ENCODE measurements at regions of chrX and their contacts with region 1.

Region 1: DNA sequence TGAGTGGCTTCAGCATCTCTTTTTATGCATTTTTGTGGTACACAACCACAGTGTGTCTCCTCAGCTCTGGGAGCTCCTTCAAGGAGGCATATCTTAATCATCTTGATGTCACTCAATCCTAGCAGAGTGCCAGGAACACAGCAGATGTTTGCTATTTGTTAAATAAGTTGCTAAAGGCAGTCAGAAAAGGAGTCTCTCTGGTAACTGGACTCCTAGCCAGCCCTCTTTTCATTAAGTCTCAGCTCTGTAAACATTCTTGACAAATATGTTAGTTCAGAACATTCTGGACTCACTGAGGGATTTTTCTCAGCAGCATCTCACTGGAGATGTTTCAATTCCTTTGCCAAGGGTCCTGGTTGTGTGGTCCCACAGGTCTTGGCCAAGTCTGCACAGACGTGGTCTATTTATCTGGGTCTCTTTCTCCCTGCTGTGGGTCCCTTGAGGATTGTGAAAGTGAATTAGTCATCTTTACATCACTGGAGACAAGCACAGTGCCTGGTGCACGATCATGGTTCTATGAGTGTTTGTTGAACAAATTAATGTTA is 20.3 kb upstream of the FAM9C start:
- DNase-seq: no peak
- ATAC-seq: no peak
- H3K4me3 ChIP-seq: no peak overlapping the region
- H3K4me3 Mint-ChIP-seq: peak overlapping the region in 1 of 10 donors; percentile 27
- H3K27ac ChIP-seq: no peak overlapping the region
- H3K27ac Mint-ChIP-seq: peak overlapping the region in 3 of 9 donors; percentile 53 to 55 (median 54)
- H3K4me1 ChIP-seq: peaks cover 0 to 12% of the 10 kb centered on the region in 2 donors
- H3K4me1 Mint-ChIP-seq: peaks cover 13 to 55% (median 43%) of the 10 kb centered on the region in 7 donors
- H3K27me3 ChIP-seq: no peaks in the 10 kb centered on the region
- H3K27me3 Mint-ChIP-seq: no peaks in the 10 kb centered on the region

Region 2: GRCh38 chrX:11813341-11813740 is 1251.3 kb before region 1 on chrX:
- CTCF ChIA-PET with region 1: no interaction called
- POLR2A ChIA-PET with region 1: no interaction called
- intact Hi-C with region 1: no loop called
- DNase-seq: no peak
- ATAC-seq: no peak
- H3K4me3 ChIP-seq: no peak overlapping the region
- H3K4me3 Mint-ChIP-seq: no peak overlapping the region
- H3K27ac ChIP-seq: no peak overlapping the region
- H3K27ac Mint-ChIP-seq: no peak overlapping the region
- H3K4me1 ChIP-seq: no peaks in the 10 kb centered on the region
- H3K4me1 Mint-ChIP-seq: peaks cover 0 to 4% (median 0%) of the 10 kb centered on the region in 7 donors
- H3K27me3 ChIP-seq: no peaks in the 10 kb centered on the region
- H3K27me3 Mint-ChIP-seq: peaks cover 0 to 4% (median 0%) of the 10 kb centered on the region in 5 donors

Region 3: GRCh38 chrX:13000301-13000811 is 64.3 kb before region 1 on chrX:
- CTCF ChIA-PET with region 1: no interaction called
- POLR2A ChIA-PET with region 1: no interaction called
- intact Hi-C with region 1: no loop called
- DNase-seq: peak in 7 of 9 donors; percentile 46 to 74 (median 68)
- ATAC-seq: peak; percentile 65
- H3K4me3 ChIP-seq: peak overlapping the region; percentile 42
- H3K4me3 Mint-ChIP-seq: peak overlapping the region; percentile 70 to 86 (median 84)
- H3K27ac ChIP-seq: peak overlapping the region; percentile 77
- H3K27ac Mint-ChIP-seq: peak overlapping the region; percentile 83 to 98 (median 95)
- H3K4me1 ChIP-seq: peaks cover 66 to 68% of the 10 kb centered on the region in 2 donors
- H3K4me1 Mint-ChIP-seq: peaks cover 27 to 88% (median 74%) of the 10 kb centered on the region in 7 donors
- H3K27me3 ChIP-seq: no peaks in the 10 kb centered on the region
- H3K27me3 Mint-ChIP-seq: no peaks in the 10 kb centered on the region

Region 4: DNA sequence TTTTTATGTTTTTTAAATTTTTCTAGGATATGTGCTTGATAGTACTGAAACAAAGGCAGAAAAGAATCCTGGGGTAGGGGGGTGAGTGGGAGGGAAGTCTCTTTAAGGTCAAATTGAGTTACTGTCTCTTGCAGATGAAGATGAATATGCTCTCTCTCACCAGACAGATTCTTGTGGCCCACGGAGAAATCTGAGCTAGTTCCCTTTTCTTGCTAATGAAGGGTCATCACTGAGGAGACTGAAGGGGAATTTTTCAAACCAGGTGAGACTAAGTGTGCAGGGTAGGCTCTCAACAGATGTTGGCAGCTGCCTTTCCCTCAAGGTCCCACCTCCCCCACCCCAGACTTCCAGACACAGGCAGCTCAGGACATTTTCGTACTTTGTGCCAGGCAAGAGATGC is 41.7 kb before region 1 on chrX:
- CTCF ChIA-PET with region 1: no interaction called
- POLR2A ChIA-PET with region 1: no interaction called
- intact Hi-C with region 1: no loop called
- DNase-seq: no peak
- ATAC-seq: no peak
- H3K4me3 ChIP-seq: no peak overlapping the region
- H3K4me3 Mint-ChIP-seq: peak overlapping the region in 7 of 10 donors; percentile 4 to 61 (median 43)
- H3K27ac ChIP-seq: no peak overlapping the region
- H3K27ac Mint-ChIP-seq: peak overlapping the region in 8 of 9 donors; percentile 44 to 87 (median 79)
- H3K4me1 ChIP-seq: peaks cover 33 to 49% of the 10 kb centered on the region in 2 donors
- H3K4me1 Mint-ChIP-seq: peaks cover 27 to 72% (median 56%) of the 10 kb centered on the region in 7 donors
- H3K27me3 ChIP-seq: no peaks in the 10 kb centered on the region
- H3K27me3 Mint-ChIP-seq: no peaks in the 10 kb centered on the region

Region 5: DNA sequence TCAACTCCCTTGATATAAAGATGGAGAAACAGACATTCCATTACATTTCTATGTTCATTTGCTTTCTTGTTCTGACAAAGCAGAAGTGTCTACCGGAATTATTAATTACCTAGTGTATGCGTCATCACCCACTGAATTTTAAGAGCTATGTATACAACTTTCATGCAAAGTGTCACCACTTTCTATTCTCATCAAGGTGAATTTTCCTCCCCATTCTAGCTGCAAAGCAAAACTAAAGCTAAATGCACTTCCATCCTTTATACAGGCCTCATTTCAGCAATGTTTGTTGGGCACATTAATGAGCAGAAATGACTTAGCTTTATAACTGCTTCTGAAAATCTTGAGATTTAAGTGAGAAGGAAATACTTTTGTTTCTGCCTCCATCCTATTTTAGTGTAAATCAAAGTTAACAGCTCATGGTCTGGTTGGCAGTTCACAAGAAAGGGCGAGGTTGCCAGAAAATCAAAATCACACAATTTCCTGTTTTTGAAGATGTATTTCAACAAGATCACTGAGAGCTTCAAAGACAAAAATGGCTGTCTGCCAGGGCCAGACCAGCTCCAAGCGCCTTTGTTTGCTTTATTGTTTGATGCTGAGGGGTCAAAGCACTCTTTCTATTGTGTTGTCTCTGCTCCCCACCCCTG is 13.0 kb before region 1 on chrX:
- CTCF ChIA-PET with region 1: interaction called, 4 read pairs
- POLR2A ChIA-PET with region 1: interaction called, 5 read pairs
- intact Hi-C with region 1: loop called in 1 of 2 experiments (anchors 1 kb)
- DNase-seq: peak in 7 of 9 donors; percentile 69 to 87 (median 79)
- ATAC-seq: peak; percentile 84
- H3K4me3 ChIP-seq: peak overlapping the region; percentile 25
- H3K4me3 Mint-ChIP-seq: peak overlapping the region; percentile 46 to 80 (median 58)
- H3K27ac ChIP-seq: peak overlapping the region; percentile 74
- H3K27ac Mint-ChIP-seq: peak overlapping the region; percentile 93 to 96 (median 95)
- H3K4me1 ChIP-seq: peaks cover 39 to 85% of the 10 kb centered on the region in 2 donors
- H3K4me1 Mint-ChIP-seq: peaks cover 14 to 93% (median 81%) of the 10 kb centered on the region in 7 donors
- H3K27me3 ChIP-seq: no peaks in the 10 kb centered on the region
- H3K27me3 Mint-ChIP-seq: no peaks in the 10 kb centered on the region

Region 6: GRCh38 chrX:13520936-13521335 is 456.3 kb after region 1 on chrX:
- CTCF ChIA-PET with region 1: no interaction called
- POLR2A ChIA-PET with region 1: no interaction called
- intact Hi-C with region 1: no loop called
- DNase-seq: no peak
- ATAC-seq: no peak
- H3K4me3 ChIP-seq: no peak overlapping the region
- H3K4me3 Mint-ChIP-seq: no peak overlapping the region
- H3K27ac ChIP-seq: no peak overlapping the region
- H3K27ac Mint-ChIP-seq: no peak overlapping the region
- H3K4me1 ChIP-seq: no peaks in the 10 kb centered on the region
- H3K4me1 Mint-ChIP-seq: no peaks in the 10 kb centered on the region
- H3K27me3 ChIP-seq: no peaks in the 10 kb centered on the region
- H3K27me3 Mint-ChIP-seq: peaks cover 0 to 5% (median 0%) of the 10 kb centered on the region in 5 donors

Measured in naive thymus-derived CD4-positive, alpha-beta T cell (primary cell).